Calu3 (cell line): ENCODE measurements at regions of chr3 and their contacts with region 1.

Region 1: DNA sequence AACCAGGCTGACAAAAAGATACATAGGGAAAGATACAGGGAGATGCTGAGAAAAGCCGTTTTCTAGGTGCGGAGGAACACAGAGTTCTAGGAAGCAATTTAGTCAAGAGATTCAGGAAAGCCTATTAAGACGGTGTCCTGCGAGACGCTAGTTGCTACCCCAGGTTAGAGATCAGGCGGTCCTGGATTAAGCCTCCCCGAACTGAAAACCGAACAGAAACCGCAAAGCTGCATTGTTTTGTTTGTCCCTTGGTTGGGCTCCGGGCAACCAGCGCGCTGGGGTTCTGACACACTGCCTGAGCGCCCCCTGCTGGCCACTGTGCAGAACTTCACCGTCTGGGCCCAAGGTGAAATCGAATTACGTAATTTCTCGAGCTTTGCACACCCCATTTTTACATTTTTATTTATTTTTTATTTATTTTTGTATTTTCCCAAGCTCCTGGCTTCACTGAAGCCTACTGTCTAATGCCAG is 37.3 kb upstream of the NDUFB4 start:
- DNase-seq: peak; percentile 86
- H3K4me3 Mint-ChIP-seq: peak overlapping the region; percentile 75
- H3K27ac Mint-ChIP-seq: peak overlapping the region; percentile 91
- H3K4me1 Mint-ChIP-seq: peaks cover 20% of the 10 kb centered on the region
- H3K27me3 Mint-ChIP-seq: no peaks in the 10 kb centered on the region
- CTCF ChIP-seq: peak; percentile 90

Region 2: DNA sequence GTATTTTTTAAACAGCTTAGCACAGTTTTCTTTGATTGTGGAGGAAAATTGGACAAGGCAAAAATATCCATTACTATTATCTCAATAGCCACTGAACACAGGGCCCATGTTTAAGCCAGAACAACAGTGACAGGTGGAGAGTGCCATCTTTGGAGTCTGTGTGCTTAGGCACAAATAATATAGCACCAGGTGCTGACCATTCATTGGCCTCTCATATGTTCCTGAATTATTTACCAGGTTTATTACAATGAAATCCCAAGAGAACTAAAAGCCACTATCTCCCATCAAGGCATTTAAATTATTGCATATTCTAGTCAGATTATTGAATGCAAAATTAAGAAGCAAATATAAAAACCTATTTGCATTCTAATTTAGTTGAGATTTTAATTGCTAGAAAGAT is 313.4 kb before region 1 on chr3:
- CTCF ChIA-PET with region 1: interaction called, 12 read pairs
- intact Hi-C with region 1: loop called (anchors 1 kb)
- DNase-seq: no peak
- H3K4me3 Mint-ChIP-seq: no peak overlapping the region
- H3K27ac Mint-ChIP-seq: no peak overlapping the region
- H3K4me1 Mint-ChIP-seq: no peaks in the 10 kb centered on the region
- H3K27me3 Mint-ChIP-seq: peaks cover 19% of the 10 kb centered on the region
- CTCF ChIP-seq: no peak

Region 3: DNA sequence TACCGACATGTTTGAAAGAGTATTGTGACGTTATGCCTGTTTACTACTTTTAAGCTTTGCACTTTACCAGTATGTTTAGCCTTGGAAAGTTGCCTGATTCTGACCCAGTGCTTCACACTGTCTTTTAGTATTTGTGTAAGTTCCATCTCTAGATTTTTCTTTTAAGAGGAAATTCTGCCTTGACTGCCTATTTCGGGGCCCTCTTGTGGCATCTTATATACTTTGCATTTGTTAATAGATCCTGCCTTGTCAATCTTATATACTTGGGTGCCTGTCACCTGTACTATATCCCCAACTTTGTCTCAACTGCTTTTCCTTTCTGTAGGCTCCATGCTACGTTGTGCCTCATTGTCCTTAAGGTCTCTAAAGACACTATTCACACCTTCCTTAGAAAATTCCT is 593.8 kb after region 1 on chr3:
- CTCF ChIA-PET with region 1: no interaction called
- intact Hi-C with region 1: loop called (anchors 10 kb)
- DNase-seq: no peak
- H3K4me3 Mint-ChIP-seq: no peak overlapping the region
- H3K27ac Mint-ChIP-seq: no peak overlapping the region
- H3K4me1 Mint-ChIP-seq: no peaks in the 10 kb centered on the region
- H3K27me3 Mint-ChIP-seq: no peaks in the 10 kb centered on the region
- CTCF ChIP-seq: no peak